ENCODE measurements at regions of chr3 and their contacts with region 1.

Region 1: GRCh38 chr3:169744366-169745054 is 20.4 kb downstream of the TERC start:
- DNase-seq: no peak
- H3K4me3 ChIP-seq: no peak overlapping the region
- H3K4me3 Mint-ChIP-seq: no peak overlapping the region
- H3K27ac ChIP-seq: no peak overlapping the region
- H3K27ac Mint-ChIP-seq: no peak overlapping the region
- H3K4me1 ChIP-seq: no peaks in the 10 kb centered on the region
- H3K4me1 Mint-ChIP-seq: peaks cover 0 to 4% (median 0%) of the 10 kb centered on the region in 4 donors
- H3K27me3 ChIP-seq: no peaks in the 10 kb centered on the region
- H3K27me3 Mint-ChIP-seq: peaks cover 23 to 29% of the 10 kb centered on the region in 2 donors

Region 2: GRCh38 chr3:168865022-168865551 is 879.4 kb before region 1 on chr3:
- CTCF ChIA-PET with region 1: interaction called, 5 read pairs
- POLR2A ChIA-PET with region 1: no interaction called
- intact Hi-C with region 1: loop called (anchors 10 kb)
- DNase-seq: no peak
- H3K4me3 ChIP-seq: no peak overlapping the region
- H3K4me3 Mint-ChIP-seq: no peak overlapping the region
- H3K27ac ChIP-seq: no peak overlapping the region
- H3K27ac Mint-ChIP-seq: no peak overlapping the region
- H3K4me1 ChIP-seq: no peaks in the 10 kb centered on the region
- H3K4me1 Mint-ChIP-seq: no peaks in the 10 kb centered on the region
- H3K27me3 ChIP-seq: no peaks in the 10 kb centered on the region
- H3K27me3 Mint-ChIP-seq: no peaks in the 10 kb centered on the region

Region 3: DNA sequence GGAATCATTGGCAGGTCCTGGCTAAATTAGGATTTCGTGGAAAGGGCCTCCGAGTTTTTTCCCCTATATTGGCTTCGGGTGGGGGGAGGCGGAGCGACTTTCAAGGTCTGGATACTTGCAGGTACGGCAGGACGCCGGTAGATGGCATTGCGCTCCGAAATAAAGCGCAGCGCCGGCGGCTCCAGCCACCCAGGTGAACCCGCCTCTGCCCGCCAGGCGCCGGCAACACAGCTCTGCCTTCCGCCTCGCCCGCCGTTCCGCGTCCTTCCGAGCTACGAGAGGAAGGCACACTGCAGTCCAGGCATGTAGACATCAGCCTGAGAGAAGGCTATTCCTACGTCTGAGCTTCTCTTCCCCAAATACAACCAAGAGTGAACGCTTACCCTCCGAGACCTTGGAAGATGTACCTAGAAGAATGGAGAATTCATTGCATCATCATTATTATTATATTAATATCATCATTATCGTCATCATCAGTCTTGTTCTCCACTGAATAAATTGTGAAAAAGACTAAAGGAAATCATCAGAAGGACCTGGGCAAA is 595.1 kb before region 1 on chr3:
- CTCF ChIA-PET with region 1: interaction called, 4 read pairs
- POLR2A ChIA-PET with region 1: no interaction called
- intact Hi-C with region 1: loop called (anchors 5 kb)
- DNase-seq: peak; percentile 41 to 59 (median 52)
- H3K4me3 ChIP-seq: no peak overlapping the region
- H3K4me3 Mint-ChIP-seq: peak overlapping the region in 6 of 8 donors; percentile 39 to 62 (median 55)
- H3K27ac ChIP-seq: no peak overlapping the region
- H3K27ac Mint-ChIP-seq: no peak overlapping the region
- H3K4me1 ChIP-seq: peaks cover 17% of the 10 kb centered on the region
- H3K4me1 Mint-ChIP-seq: peaks cover 13 to 25% (median 20%) of the 10 kb centered on the region in 4 donors
- H3K27me3 ChIP-seq: peaks cover 34% of the 10 kb centered on the region
- H3K27me3 Mint-ChIP-seq: peaks cover 44 to 45% of the 10 kb centered on the region in 2 donors

Measured in CD4-positive, alpha-beta memory T cell (primary cell).